T-cell (primary cell): ENCODE measurements at regions of chr19 and their contacts with region 1.

Region 1: GRCh38 chr19:961866-962620 is 22.1 kb upstream of the WDR18 start:
- DNase-seq: no peak
- ATAC-seq: no peak
- H3K4me3 ChIP-seq: no peak overlapping the region
- H3K4me3 Mint-ChIP-seq: no peak overlapping the region
- H3K27ac ChIP-seq: no peak overlapping the region
- H3K27ac Mint-ChIP-seq: no peak overlapping the region
- H3K4me1 ChIP-seq: peaks cover 0 to 6% of the 10 kb centered on the region in 2 experiments
- H3K4me1 Mint-ChIP-seq: peaks cover 0 to 8% (median 3%) of the 10 kb centered on the region in 3 donors
- H3K27me3 ChIP-seq: no peaks in the 10 kb centered on the region
- H3K27me3 Mint-ChIP-seq: no peaks in the 10 kb centered on the region

Region 2: GRCh38 chr19:1154731-1155351 is 192.8 kb after region 1 on chr19:
- CTCF ChIA-PET with region 1: interaction called in 1 of 2 experiments, 10 read pairs
- POLR2A ChIA-PET with region 1: no interaction called
- DNase-seq: peak in 1 of 35 experiments; percentile 23
- ATAC-seq: no peak
- H3K4me3 ChIP-seq: no peak overlapping the region
- H3K4me3 Mint-ChIP-seq: no peak overlapping the region
- H3K27ac ChIP-seq: no peak overlapping the region
- H3K27ac Mint-ChIP-seq: no peak overlapping the region
- H3K4me1 ChIP-seq: peaks cover 0 to 1% of the 10 kb centered on the region in 2 experiments
- H3K4me1 Mint-ChIP-seq: peaks cover 0 to 3% (median 0%) of the 10 kb centered on the region in 3 donors
- H3K27me3 ChIP-seq: no peaks in the 10 kb centered on the region
- H3K27me3 Mint-ChIP-seq: no peaks in the 10 kb centered on the region